ENCODE measurements at regions of chr1 and their contacts with region 1.

Region 1: DNA sequence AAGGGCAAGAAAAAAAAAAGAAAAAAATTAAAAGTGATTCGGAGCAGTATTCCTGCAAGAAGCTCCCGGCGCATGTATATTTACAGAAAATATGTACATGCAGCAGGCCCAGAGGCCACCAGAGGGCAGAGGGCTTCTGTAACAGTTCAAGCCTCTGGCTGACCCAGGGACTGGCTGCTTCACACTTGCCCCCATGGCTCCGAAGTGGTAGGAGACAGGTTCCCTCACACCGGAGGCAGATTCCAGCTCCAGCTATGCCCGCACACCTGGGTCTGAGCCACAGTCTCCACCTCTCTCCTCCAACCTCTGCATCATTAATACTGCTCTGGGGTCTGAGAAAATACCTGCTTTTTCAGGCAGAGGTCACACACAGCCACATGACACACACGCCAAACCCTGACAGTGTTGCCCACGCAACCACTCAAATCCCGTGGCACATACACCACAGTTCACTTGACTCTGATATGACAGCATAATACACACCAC is 2.2 kb upstream of the ARHGAP30 start:
- DNase-seq: peak; percentile 86
- H3K4me3 Mint-ChIP-seq: no peak overlapping the region
- H3K27ac Mint-ChIP-seq: peak overlapping the region; percentile 69
- H3K4me1 Mint-ChIP-seq: peaks cover 47% of the 10 kb centered on the region
- H3K27me3 Mint-ChIP-seq: no peaks in the 10 kb centered on the region

Region 2: DNA sequence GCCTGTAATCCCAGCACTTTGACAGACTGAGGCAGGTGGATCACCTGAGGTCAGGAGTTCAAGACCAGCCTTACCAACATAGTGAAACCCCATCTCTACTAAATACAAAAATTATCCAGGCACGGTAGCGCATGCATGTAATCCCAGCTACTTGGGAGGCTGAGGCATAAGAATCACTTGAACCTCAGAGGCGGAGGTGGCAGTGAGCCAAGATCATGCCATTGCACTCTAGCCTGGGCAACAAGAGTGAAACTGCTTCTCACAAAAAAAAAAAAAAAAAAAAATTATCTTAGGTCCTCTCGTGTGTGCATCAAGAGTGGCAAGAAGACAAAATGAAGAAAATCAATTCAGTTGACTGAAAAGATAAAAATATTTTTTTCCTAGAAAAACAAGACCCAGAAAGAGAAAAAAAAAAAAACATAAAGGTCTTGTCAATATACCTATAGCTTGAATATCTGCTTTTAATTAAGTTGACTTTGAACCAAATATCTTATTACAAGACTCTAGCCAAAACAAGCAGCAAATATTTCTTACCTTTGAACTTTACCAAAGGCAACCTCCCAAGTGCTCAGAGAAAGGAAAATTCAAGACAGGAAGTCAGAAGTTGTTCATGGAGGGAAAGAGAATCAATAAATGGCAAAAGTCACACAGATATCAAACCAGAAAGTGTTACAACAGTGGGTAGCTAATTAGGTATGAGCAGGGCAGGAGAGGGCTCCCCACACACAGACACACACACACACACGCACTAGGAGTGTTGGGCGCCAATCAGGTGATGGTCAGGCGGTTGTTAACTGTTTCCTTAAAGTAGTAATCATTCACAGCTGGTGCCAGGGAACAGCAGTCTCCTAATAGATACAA is 146.9 kb before region 1 on chr1:
- intact Hi-C with region 1: no loop called
- DNase-seq: no peak
- H3K4me3 Mint-ChIP-seq: no peak overlapping the region
- H3K27ac Mint-ChIP-seq: no peak overlapping the region
- H3K4me1 Mint-ChIP-seq: no peaks in the 10 kb centered on the region
- H3K27me3 Mint-ChIP-seq: peaks cover 7% of the 10 kb centered on the region

Region 3: DNA sequence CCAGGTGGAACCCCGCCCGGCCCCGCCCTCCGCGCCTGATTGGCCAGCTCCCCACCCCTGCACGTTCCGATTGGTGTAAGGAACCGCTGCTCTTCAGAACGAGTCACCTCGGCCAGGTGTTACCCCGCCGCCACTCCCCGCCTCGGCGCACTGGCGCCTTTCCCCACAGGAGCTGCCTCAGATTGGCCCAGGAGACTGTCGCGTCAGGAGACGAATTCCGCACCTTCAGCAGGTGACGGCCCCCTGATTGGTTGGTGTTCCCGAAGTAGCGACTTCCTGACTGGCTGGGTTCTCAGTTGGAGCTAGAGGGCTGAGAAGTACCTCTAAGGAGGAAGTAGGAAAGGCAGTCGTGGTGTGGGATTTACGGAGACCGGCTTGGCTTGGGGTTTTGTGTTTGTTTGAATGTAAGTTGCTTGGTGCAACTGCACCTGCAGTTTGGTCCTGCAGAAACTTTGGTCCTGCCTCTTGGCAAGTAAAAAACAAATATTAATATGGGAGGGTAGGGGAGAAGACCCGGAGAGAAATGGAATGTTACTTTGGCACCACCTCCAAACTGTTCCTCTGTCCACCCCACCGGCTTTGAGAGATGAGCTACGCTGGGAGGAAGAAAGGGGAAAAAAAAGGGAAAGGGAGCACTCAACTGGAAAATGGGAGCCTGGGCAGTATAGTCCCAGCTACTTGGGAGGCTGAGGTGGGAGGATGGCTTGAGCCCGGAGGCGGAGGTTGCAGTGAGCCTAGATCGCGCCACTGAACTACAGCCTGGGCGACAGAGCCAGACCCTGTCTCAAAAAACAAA is 50.6 kb before region 1 on chr1:
- intact Hi-C with region 1: loop called (anchors 1 kb)
- DNase-seq: peak; percentile 94
- H3K4me3 Mint-ChIP-seq: peak overlapping the region; percentile 94
- H3K27ac Mint-ChIP-seq: peak overlapping the region; percentile 86
- H3K4me1 Mint-ChIP-seq: peaks cover 38% of the 10 kb centered on the region
- H3K27me3 Mint-ChIP-seq: no peaks in the 10 kb centered on the region

Region 4: DNA sequence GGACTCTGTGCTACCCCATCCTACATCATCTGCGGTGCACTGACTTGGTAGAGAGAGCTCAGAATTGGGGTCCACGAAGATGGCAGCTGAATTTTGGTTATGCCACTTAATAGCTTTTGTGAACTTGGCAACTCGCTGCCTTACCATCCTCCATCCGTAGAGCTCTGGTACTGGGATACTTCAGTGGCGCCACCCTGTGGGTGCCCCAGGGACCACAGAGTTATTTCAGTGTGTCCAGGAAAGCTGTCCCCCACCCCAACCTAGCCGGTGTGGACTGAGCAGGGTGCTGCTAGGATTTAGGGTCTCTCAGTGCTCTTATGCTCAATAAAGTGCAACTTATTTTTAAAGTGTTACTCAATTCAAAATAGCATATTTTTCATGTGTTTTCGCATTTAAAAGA is 17.1 kb before region 1 on chr1:
- intact Hi-C with region 1: no loop called
- DNase-seq: no peak
- H3K4me3 Mint-ChIP-seq: no peak overlapping the region
- H3K27ac Mint-ChIP-seq: no peak overlapping the region
- H3K4me1 Mint-ChIP-seq: peaks cover 20% of the 10 kb centered on the region
- H3K27me3 Mint-ChIP-seq: no peaks in the 10 kb centered on the region

Region 5: GRCh38 chr1:161092621-161093028 is 20.7 kb after region 1 on chr1:
- intact Hi-C with region 1: loop called (anchors 1 kb)
- DNase-seq: peak; percentile 76
- H3K4me3 Mint-ChIP-seq: peak overlapping the region; percentile 50
- H3K27ac Mint-ChIP-seq: peak overlapping the region; percentile 85
- H3K4me1 Mint-ChIP-seq: peaks cover 66% of the 10 kb centered on the region
- H3K27me3 Mint-ChIP-seq: peaks cover 2% of the 10 kb centered on the region

Region 6: GRCh38 chr1:161117759-161118581 is 46.0 kb after region 1 on chr1 and contains the starts of genes NIT1 and PFDN2:
- intact Hi-C with region 1: loop called (anchors 1 kb)
- DNase-seq: peak; percentile 97
- H3K4me3 Mint-ChIP-seq: peak within 1 kb of the TSS; percentile 98
- H3K27ac Mint-ChIP-seq: peak within 1 kb of the TSS; percentile 92
- H3K4me1 Mint-ChIP-seq: peaks cover 61% of the 10 kb centered on the region
- H3K27me3 Mint-ChIP-seq: no peaks in the 10 kb centered on the region
- total RNA-seq, gene NIT1: 46.7 and 48.2 TPM in 2 replicates
- total RNA-seq, gene PFDN2: 173 and 178 TPM in 2 replicates

Region 7: DNA sequence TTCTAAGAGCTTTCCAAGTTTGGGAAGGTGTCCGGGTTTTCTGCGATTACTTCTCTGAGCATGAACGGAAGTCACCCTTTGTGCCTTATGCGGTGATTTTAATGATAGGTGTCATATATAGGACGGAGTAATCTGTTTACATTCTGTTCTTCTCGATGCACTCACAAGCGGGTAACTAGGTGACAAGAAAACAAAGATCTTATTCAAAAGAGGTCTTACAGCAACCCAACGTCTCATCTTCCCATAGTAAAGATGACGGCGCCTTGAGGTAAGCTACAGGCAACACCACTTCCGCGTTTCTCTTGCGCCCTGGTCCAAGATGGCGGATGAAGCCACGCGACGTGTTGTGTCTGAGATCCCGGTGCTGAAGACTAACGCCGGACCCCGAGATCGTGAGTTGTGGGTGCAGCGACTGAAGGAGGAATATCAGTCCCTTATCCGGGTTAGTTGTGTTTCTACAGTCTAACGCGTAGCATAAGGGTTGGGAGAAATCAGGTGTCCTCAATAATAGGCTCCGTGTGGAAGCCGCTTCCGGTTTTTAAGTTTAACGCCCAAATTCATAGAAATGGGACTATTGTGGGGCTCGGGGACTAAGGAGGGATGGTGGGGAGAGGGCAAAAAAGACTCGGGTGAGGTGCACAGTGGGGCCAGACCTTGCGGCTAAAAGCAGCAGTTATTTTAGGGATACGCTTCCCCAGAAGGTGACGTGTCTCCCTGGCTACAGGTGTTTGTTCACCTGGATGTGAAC is 81.9 kb after region 1 on chr1 and contains the start of gene UFC1:
- intact Hi-C with region 1: loop called (anchors 1 kb)
- DNase-seq: peak; percentile 95
- H3K4me3 Mint-ChIP-seq: peak within 1 kb of the TSS; percentile 97
- H3K27ac Mint-ChIP-seq: peak within 1 kb of the TSS; percentile 100
- H3K4me1 Mint-ChIP-seq: peaks cover 23% of the 10 kb centered on the region
- H3K27me3 Mint-ChIP-seq: no peaks in the 10 kb centered on the region
- total RNA-seq, gene UFC1: 84.2 and 86.6 TPM in 2 replicates

Measured in activated CD4-positive, alpha-beta T cell treated with anti-CD3 and anti-CD28 coated beads, Interleukin-2, amount 10 ng/mL, durations not matched to agents 24 days and 14 days (primary cell).